GM12878 (cell line): ENCODE measurements at regions of chr7 and their contacts with region 1.

Region 1: GRCh38 chr7:28551331-28551730 is 139.0 kb downstream of the CREB5 start:
- DNase-seq: no peak
- ATAC-seq: no peak
- H3K4me3 ChIP-seq: no peak overlapping the region
- H3K27ac ChIP-seq: no peak overlapping the region
- H3K4me1 ChIP-seq: no peaks in the 10 kb centered on the region
- H3K27me3 ChIP-seq: no peaks in the 10 kb centered on the region
- CTCF ChIP-seq: no peak
- EP300 ChIP-seq: no peak
- POLR2A ChIP-seq: no peak
- RAD21 ChIP-seq: no peak

Region 2: DNA sequence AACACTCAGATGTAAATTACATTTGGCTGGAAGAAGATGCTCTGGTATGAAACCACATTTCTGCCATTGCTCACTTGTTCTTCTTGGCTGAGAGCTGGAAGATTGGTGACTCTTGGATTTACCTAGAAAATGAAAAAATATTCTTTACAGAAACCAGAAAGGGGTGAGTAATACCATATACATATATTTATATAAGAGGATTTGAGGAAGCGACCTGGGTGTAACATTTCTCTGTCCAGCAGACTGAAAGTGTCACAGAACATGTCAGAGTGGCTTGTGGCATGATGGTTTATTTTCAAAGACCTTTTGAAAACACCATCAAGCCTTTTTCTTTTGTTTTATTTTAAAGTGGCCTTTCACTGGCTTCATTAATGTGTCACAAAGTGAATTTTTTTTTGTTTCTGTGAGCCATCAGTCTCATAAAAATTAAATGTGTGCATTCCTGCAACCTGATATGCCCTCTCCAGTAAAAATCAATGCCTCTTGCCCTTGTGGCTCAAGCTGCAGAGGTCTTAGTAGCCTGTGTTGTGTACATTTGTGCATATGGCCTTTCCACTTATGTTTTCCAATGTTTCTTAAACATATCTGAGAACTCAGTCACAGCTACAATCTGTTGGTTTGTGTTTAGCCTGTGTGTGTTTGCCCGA is 115.5 kb before region 1 on chr7:
- CTCF ChIA-PET with region 1: no interaction called
- POLR2A ChIA-PET with region 1: no interaction called
- RAD21 ChIA-PET with region 1: no interaction called
- SMC1A ChIA-PET with region 1: no interaction called
- in situ Hi-C with region 1: no loop called
- intact Hi-C with region 1: no loop called
- DNase-seq: no peak
- ATAC-seq: peak; percentile 78
- H3K4me3 ChIP-seq: no peak overlapping the region
- H3K27ac ChIP-seq: no peak overlapping the region
- H3K4me1 ChIP-seq: no peaks in the 10 kb centered on the region
- H3K27me3 ChIP-seq: no peaks in the 10 kb centered on the region; a peak in 1 of 4 replicates
- CTCF ChIP-seq: no peak
- EP300 ChIP-seq: no peak
- POLR2A ChIP-seq: no peak
- RAD21 ChIP-seq: no peak

Region 3: DNA sequence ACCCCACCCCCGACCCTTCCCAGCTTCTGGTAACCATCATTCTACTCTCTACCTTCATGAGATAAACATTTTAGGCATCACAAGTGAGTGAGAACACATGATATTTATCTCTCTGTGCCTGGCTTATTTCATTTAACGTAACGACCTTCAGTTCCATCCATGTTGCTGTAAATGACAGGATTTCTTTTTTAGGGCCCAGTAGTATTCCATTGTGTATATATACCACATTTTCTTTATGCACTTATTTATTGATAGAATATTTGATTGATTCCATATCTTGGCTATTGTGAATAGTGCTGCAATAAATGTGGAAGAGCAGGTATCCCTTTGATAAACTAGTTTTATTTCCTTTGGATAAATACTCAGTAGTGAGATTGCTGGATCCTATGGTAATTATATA is 26.4 kb before region 1 on chr7:
- CTCF ChIA-PET with region 1: no interaction called
- POLR2A ChIA-PET with region 1: no interaction called
- RAD21 ChIA-PET with region 1: no interaction called
- SMC1A ChIA-PET with region 1: no interaction called
- in situ Hi-C with region 1: no loop called
- intact Hi-C with region 1: no loop called
- DNase-seq: no peak
- ATAC-seq: no peak
- H3K4me3 ChIP-seq: no peak overlapping the region
- H3K27ac ChIP-seq: no peak overlapping the region
- H3K4me1 ChIP-seq: peaks cover 14% of the 10 kb centered on the region
- H3K27me3 ChIP-seq: no peaks in the 10 kb centered on the region
- CTCF ChIP-seq: no peak
- EP300 ChIP-seq: no peak
- POLR2A ChIP-seq: no peak
- RAD21 ChIP-seq: no peak

Region 4: DNA sequence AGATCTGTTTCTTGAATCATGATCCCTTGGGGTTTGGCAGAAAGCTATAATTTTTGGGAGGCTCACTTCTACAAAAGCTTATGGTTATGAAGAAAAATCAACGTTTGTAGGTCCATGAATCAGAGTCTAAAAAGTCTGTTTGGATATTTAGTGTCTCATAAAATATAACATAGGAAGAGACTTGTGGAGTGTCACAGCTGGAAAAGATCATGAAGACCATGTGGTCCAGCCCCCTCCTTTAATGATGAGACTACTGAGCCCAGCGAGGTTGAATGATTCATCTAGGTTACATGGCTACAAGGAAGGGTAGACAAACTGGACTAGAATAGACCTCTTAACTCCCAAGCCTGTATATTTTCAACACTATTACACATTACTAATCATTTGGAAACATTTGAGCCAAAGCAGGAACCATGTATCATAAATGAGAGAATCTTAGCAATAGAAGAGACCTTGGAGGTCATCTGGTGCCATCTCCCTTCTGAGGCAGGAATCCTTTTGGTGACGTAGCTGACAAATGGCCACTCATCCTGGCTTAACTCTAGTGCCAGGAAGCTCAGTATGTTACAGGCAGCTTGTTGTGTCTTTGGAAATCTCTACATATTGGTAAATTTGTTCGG is 13.5 kb after region 1 on chr7:
- CTCF ChIA-PET with region 1: interaction called, 20 read pairs
- POLR2A ChIA-PET with region 1: interaction called, 5 read pairs
- RAD21 ChIA-PET with region 1: interaction called, 7 read pairs
- SMC1A ChIA-PET with region 1: interaction called, 101 read pairs
- in situ Hi-C with region 1: no loop called
- intact Hi-C with region 1: loop called (anchors 2 kb)
- DNase-seq: no peak
- ATAC-seq: no peak
- H3K4me3 ChIP-seq: no peak overlapping the region
- H3K27ac ChIP-seq: no peak overlapping the region
- H3K4me1 ChIP-seq: peaks cover under 1% of the 10 kb centered on the region; the same call in 1 of the 2 replicates
- H3K27me3 ChIP-seq: no peaks in the 10 kb centered on the region; a peak in 1 of 4 replicates
- CTCF ChIP-seq: no peak
- EP300 ChIP-seq: no peak
- POLR2A ChIP-seq: no peak
- RAD21 ChIP-seq: no peak